SK-N-SH (cell line): ENCODE measurements at regions of chr6 and their contacts with region 1.

Region 1: GRCh38 chr6:90393232-90393884 is 96.7 kb upstream of the BACH2 start:
- DNase-seq: peak; percentile 61
- H3K4me3 ChIP-seq: no peak overlapping the region; a peak in 1 of 4 replicates
- H3K27ac ChIP-seq: no peak overlapping the region
- H3K4me1 ChIP-seq: peaks cover 0 to 14% of the 10 kb centered on the region in 2 experiments; a peak in 1 of 4 replicates
- H3K27me3 ChIP-seq: peaks cover 9% of the 10 kb centered on the region; the same call in 1 of the 2 replicates
- CTCF ChIP-seq: peak; percentile 89
- EP300 ChIP-seq: no peak
- RAD21 ChIP-seq: peak; percentile 85

Region 2: GRCh38 chr6:89940225-89941027 is 452.9 kb before region 1 on chr6:
- CTCF ChIA-PET with region 1: interaction called, 24 read pairs
- POLR2A ChIA-PET with region 1: no interaction called
- DNase-seq: peak; percentile 83
- H3K4me3 ChIP-seq: no peak overlapping the region; a peak in 1 of 4 replicates
- H3K27ac ChIP-seq: no peak overlapping the region
- H3K4me1 ChIP-seq: no peaks in the 10 kb centered on the region; a peak in 1 of 4 replicates
- H3K27me3 ChIP-seq: no peaks in the 10 kb centered on the region
- CTCF ChIP-seq: peak; percentile 82
- EP300 ChIP-seq: no peak
- RAD21 ChIP-seq: peak; percentile 98

Region 3: DNA sequence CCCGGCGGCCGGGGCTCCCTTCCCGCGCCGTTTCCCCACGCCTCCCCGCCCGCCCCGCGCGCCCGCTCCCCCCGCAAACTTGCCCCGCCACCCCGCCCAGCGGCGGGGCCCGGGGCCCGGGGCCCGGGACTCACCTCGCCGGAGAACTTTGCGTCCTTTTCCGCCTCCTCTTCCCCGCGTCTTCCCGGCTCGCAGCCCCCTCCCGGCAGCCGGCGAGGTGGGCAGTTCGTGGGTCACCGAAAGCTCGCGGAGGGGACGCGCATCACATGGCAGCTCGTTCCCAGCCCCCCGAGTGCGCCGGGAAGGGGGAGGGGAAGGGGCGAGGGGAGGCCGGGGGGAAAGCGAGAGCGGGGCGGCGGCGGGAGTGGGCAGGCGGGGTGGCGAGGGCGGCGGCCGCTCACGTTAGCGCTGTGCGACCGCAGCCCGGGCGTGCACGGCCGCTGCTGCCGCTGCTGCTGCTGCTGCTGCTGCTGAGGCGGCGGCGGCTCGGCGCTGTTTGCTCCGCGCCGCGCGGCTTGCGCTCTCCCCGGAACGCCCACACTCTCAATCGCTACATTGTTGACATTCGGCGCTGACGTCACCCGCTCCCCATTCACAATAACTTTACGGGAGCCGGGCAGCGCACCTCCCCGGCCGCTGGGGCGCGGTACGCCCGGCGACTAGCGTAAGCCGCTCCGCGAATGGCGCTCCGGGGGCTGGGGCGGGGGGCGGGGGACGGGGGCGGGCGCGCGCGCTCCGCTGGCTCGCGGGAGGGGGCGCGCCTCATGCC is 96.8 kb before region 1 on chr6 and contains the start of gene BACH2:
- CTCF ChIA-PET with region 1: interaction called, 12 read pairs
- POLR2A ChIA-PET with region 1: no interaction called
- DNase-seq: peak; percentile 88
- H3K4me3 ChIP-seq: peak within 1 kb of the TSS; percentile 59 to 63
- H3K27ac ChIP-seq: peak within 1 kb of the TSS in 1 of 2 experiments; percentile 69; a peak in 1 of 4 replicates
- H3K4me1 ChIP-seq: peaks cover 0 to 30% of the 10 kb centered on the region in 2 experiments; a peak in 2 of 4 replicates
- H3K27me3 ChIP-seq: peaks cover 29% of the 10 kb centered on the region
- CTCF ChIP-seq: no peak
- EP300 ChIP-seq: no peak
- RAD21 ChIP-seq: no peak
- polyA plus RNA-seq, gene BACH2: 0.46 and 0.50 TPM in 2 replicates

Region 4: DNA sequence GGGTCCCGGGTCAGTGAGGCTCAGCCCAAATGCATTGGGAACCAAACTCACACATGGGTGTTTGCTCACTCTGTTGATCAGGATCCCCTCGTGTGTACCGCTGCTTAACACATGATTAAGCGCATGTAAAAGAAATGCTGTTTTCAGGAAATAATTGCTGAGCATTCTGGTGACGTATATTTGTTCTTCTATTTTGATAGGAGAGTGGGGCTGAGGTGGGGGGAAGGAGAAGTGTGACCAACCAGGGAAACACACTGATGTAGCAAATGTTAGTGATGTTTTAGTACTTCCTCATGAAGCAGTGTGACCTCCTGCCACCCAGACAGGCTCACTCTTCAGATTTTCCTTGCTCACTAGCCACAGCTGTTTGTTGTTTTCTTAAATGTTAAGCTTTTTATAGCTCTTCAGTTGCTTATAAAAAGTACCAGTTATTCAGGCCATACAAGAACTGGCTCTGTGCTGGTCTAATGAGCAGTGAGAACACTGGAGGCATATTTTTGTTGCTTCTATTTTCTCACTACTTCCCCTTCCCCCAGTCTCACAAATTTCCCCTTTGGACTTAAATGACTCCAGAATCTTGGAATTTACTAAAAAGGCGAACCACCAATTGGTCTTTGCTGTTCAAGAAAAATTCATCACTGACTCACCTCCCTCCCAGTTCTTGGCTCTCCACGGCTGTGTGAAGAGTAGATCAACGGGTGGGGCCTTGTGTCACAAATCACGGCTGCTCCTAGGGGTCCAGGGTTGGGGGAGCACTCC is 17.5 kb before region 1 on chr6:
- CTCF ChIA-PET with region 1: interaction called, 20 read pairs
- POLR2A ChIA-PET with region 1: no interaction called
- DNase-seq: no peak
- H3K4me3 ChIP-seq: no peak overlapping the region
- H3K27ac ChIP-seq: peak overlapping the region in 1 of 2 experiments; percentile 54; a peak in 2 of 4 replicates
- H3K4me1 ChIP-seq: peaks cover 0 to 2% of the 10 kb centered on the region in 2 experiments; a peak in 1 of 4 replicates
- H3K27me3 ChIP-seq: no peaks in the 10 kb centered on the region
- CTCF ChIP-seq: no peak
- EP300 ChIP-seq: no peak
- RAD21 ChIP-seq: no peak

Region 5: GRCh38 chr6:90411292-90411781 is 18.0 kb after region 1 on chr6:
- CTCF ChIA-PET with region 1: interaction called, 17 read pairs
- POLR2A ChIA-PET with region 1: no interaction called
- DNase-seq: no peak
- H3K4me3 ChIP-seq: no peak overlapping the region
- H3K27ac ChIP-seq: no peak overlapping the region
- H3K4me1 ChIP-seq: peaks cover 0 to 10% of the 10 kb centered on the region in 2 experiments; a peak in 1 of 4 replicates
- H3K27me3 ChIP-seq: no peaks in the 10 kb centered on the region
- CTCF ChIP-seq: no peak
- EP300 ChIP-seq: no peak
- RAD21 ChIP-seq: no peak

Region 6: DNA sequence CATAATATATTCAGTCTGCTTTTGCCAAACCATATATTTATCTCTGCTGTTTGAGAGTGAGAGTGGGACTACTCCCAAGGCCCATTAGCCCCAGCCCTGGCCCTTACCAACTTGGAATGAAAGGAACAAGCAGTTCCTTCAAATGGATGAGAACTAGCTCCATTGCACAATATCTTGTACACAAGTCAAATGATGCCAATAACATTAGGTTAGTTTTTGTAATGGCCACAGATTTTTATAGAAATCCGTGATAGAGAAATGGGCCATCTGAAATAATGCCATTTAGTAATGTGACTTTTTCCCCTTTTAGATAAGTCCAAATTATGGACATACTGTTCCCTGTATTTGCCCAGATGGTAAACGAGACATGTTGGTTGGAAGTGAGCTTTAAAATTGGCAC is 76.5 kb after region 1 on chr6:
- CTCF ChIA-PET with region 1: interaction called, 10 read pairs
- POLR2A ChIA-PET with region 1: no interaction called
- DNase-seq: no peak
- H3K4me3 ChIP-seq: no peak overlapping the region
- H3K27ac ChIP-seq: no peak overlapping the region
- H3K4me1 ChIP-seq: peaks cover 0 to 4% of the 10 kb centered on the region in 2 experiments; a peak in 2 of 4 replicates
- H3K27me3 ChIP-seq: no peaks in the 10 kb centered on the region
- CTCF ChIP-seq: no peak
- EP300 ChIP-seq: no peak
- RAD21 ChIP-seq: no peak

Region 7: DNA sequence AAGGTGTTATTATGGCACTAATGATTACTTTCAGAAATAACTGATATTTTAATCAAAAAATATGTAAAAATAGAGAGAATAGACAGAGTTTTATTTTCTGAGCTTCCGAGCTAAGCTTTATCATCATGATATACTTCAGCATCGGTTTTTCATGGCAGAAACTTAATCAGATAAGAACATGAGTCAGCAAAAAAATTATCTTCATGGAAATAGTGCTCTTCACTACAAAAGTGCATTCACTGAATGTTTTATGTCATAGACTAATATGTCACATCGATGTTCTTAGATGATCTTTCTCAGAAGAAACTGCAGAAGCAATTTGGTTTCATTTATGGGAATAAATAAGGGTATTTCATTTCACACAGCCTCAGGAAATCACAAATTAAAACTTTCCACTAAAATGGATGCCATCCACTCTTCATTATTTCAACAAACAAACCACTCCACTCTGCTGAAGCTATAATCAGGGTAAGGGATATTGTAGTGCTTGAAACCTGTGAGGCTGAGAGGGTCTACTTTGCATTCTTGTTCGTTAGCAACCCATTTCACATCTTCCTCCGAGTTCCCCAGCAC is 203.7 kb after region 1 on chr6:
- CTCF ChIA-PET with region 1: no interaction called
- POLR2A ChIA-PET with region 1: no interaction called
- DNase-seq: no peak
- H3K4me3 ChIP-seq: no peak overlapping the region
- H3K27ac ChIP-seq: peak overlapping the region in 1 of 2 experiments; percentile 5; a peak in 1 of 4 replicates
- H3K4me1 ChIP-seq: no peaks in the 10 kb centered on the region
- H3K27me3 ChIP-seq: no peaks in the 10 kb centered on the region; the same call in 1 of the 2 replicates
- CTCF ChIP-seq: no peak
- EP300 ChIP-seq: no peak
- RAD21 ChIP-seq: no peak